ENCODE measurements at regions of chr20 and their contacts with region 1.

Region 1: DNA sequence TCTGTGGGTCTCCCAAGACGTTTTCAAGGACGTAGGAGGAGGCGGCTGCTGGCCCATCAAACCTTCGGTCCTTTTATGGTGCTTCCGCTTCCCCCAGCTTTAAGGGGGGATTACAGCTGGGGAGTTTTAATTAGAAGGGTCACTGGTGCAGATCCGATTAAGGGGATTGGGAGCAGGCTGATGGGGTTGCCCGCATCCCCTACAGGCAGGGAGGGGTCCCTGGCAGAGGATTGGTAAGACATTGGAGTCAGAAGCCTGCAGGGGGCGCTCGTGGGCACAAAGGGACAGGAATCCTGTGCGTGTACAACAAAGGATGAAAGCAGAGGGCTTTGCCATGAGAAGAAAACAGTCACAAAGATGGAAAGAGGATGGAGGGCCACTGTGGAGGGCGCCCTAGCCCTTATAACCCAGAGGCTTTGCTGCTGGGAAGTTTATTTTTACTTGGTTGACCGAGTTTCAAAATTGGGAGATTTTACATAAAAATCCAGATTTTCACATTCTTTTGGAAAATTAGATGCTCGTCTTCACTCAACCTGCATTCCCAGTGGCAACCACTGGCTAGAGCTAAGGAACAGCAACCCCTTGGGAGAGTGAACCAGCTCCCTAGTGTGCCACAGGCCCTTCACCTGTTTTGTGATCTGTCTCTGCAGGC is 97.9 kb downstream of the KCNB1 start:
- DNase-seq: peak; percentile 97
- ATAC-seq: peak; percentile 79
- H3K4me3 Mint-ChIP-seq: no peak overlapping the region
- H3K27ac Mint-ChIP-seq: 0 out of 2 replicates have a peak overlapping the region, but pooled peaks have one; percentile 1
- H3K4me1 Mint-ChIP-seq: peaks cover 29% of the 10 kb centered on the region
- H3K27me3 Mint-ChIP-seq: no peaks in the 10 kb centered on the region
- CTCF ChIP-seq: peak; percentile 91

Region 2: GRCh38 chr20:49367113-49367512 is 17.4 kb before region 1 on chr20:
- CTCF ChIA-PET with region 1: interaction called, 20 read pairs
- POLR2A ChIA-PET with region 1: no interaction called
- DNase-seq: no peak
- ATAC-seq: no peak
- H3K4me3 Mint-ChIP-seq: no peak overlapping the region
- H3K27ac Mint-ChIP-seq: no peak overlapping the region
- H3K4me1 Mint-ChIP-seq: no peaks in the 10 kb centered on the region
- H3K27me3 Mint-ChIP-seq: no peaks in the 10 kb centered on the region
- CTCF ChIP-seq: no peak

Region 3: GRCh38 chr20:49411221-49411925 is 26.8 kb after region 1 on chr20:
- CTCF ChIA-PET with region 1: interaction called, 17 read pairs
- POLR2A ChIA-PET with region 1: no interaction called
- DNase-seq: no peak
- ATAC-seq: no peak
- H3K4me3 Mint-ChIP-seq: no peak overlapping the region
- H3K27ac Mint-ChIP-seq: no peak overlapping the region
- H3K4me1 Mint-ChIP-seq: no peaks in the 10 kb centered on the region
- H3K27me3 Mint-ChIP-seq: no peaks in the 10 kb centered on the region; the same call in 1 of the 2 replicates
- CTCF ChIP-seq: no peak

Region 4: GRCh38 chr20:49427751-49428518 is 43.4 kb after region 1 on chr20:
- CTCF ChIA-PET with region 1: interaction called, 10 read pairs
- POLR2A ChIA-PET with region 1: no interaction called
- DNase-seq: no peak
- ATAC-seq: no peak
- H3K4me3 Mint-ChIP-seq: no peak overlapping the region
- H3K27ac Mint-ChIP-seq: no peak overlapping the region
- H3K4me1 Mint-ChIP-seq: no peaks in the 10 kb centered on the region
- H3K27me3 Mint-ChIP-seq: no peaks in the 10 kb centered on the region; the same call in 1 of the 2 replicates
- CTCF ChIP-seq: no peak

Region 5: DNA sequence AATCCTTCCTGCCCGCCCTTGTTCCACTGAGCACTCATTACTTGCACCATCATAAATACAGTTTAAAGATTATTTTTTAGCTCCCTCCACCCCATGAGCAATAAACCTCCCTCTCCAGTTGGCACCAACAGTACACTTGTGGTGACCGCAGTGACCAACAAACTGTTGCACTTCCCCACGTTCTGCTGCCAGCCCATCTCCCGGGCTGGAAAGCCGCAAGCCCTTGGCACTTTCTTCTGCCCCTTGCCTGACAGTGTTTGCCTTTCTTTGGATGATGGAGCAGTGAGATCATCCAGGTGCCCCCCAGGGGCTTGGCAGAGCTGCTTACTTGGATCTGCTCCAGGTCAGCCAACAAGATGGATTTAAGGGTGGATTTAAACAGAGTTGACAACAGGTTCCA is 76.4 kb after region 1 on chr20:
- CTCF ChIA-PET with region 1: no interaction called
- POLR2A ChIA-PET with region 1: no interaction called
- DNase-seq: no peak
- ATAC-seq: no peak
- H3K4me3 Mint-ChIP-seq: no peak overlapping the region
- H3K27ac Mint-ChIP-seq: no peak overlapping the region
- H3K4me1 Mint-ChIP-seq: no peaks in the 10 kb centered on the region
- H3K27me3 Mint-ChIP-seq: peaks cover 4% of the 10 kb centered on the region; the same call in 1 of the 2 replicates
- CTCF ChIP-seq: no peak

Region 6: DNA sequence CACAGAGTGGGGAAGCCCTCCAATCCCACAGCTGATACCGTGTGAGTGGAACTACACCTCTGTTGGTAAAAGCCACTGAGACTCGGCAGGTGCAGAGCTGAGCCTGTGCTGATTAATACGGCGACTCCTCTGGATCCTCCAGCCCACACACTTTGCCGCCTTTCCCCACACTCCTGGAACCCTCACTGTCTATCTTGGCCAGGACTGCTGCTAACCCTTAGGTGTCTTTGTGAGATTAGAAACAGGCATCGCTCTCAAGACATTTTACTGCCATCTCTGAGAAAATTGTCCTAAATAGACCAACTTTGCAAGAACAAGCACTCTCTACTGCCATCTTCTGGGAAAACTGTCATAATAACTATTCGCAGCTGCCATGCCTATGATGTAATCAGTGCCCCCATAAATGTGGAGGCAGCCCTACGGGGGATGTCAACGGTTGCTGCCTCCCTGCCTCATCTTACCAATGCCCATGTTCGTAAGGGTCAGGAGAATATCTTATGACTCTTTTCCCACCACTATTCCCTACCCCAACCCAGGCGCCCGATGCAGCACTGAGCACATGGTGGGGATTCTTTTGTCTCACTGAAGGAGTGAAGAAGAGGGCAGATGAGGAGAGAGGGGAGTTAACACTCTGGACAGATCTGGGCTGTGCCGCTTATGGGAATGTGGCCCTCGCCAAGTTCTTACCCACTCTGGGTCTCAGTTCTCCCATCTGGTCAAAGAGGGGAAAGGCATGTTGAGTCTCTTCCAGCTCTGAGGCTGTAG is 124.1 kb after region 1 on chr20:
- CTCF ChIA-PET with region 1: interaction called, 19 read pairs
- POLR2A ChIA-PET with region 1: no interaction called
- DNase-seq: no peak
- ATAC-seq: peak; percentile 75
- H3K4me3 Mint-ChIP-seq: no peak overlapping the region
- H3K27ac Mint-ChIP-seq: no peak overlapping the region
- H3K4me1 Mint-ChIP-seq: 0 out of 2 replicates have a peak, but pooled peaks cover under 1% of the 10 kb centered on the region
- H3K27me3 Mint-ChIP-seq: no peaks in the 10 kb centered on the region
- CTCF ChIP-seq: peak; percentile 43